Breast epithelium (tissue), 4 donors: ENCODE measurements at regions of chrX and their contacts with region 1.

Region 1: DNA sequence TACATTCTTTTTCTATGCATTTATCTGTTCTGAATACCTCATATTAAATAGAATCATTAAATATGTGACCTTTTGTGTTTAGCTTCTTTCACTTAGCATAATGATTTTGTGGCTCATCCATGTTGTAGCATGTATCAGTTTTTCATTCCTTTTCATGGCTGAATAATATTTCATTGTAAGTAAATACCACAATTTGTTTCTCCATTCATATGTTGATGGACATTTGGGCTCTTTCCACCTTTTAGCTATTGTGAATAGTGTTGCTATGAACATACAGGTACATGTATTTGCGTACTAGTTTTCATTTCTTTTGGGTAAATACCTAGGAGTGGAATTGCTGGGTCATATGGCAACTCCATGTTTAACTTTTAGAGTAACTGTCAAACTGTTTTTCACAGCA is 85.1 kb downstream of the GNL3L start:
- DNase-seq: no peak
- H3K4me3 ChIP-seq: no peak overlapping the region
- H3K27ac ChIP-seq: no peak overlapping the region
- H3K4me1 ChIP-seq: no peaks in the 10 kb centered on the region
- H3K27me3 ChIP-seq: peaks cover 0 to 4% of the 10 kb centered on the region in 2 donors
- CTCF ChIP-seq: no peak
- POLR2A ChIP-seq: no peak

Region 2: DNA sequence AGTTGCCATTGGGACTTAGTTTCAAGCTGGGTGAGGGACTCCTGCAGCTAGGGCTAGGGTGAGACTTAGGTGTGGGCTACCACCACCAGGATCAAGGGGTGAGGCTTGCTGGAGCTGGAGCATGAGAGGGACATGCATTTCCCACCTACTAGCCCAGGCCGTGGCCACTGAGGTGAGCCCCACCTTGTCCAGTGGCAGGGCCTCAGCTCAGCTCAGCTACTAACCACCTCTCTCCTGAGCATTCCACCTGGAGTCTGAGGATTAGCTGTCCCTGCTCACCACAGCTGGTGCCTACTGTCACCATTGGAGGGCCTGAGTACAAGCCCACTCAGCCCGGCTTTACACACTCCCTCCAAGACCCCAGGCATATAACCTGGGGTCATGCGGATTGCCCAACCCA is 774.3 kb after region 1 on chrX:
- intact Hi-C with region 1: loop called (anchors 5 kb)
- DNase-seq: no peak
- H3K4me3 ChIP-seq: no peak overlapping the region
- H3K27ac ChIP-seq: no peak overlapping the region
- H3K4me1 ChIP-seq: no peaks in the 10 kb centered on the region
- H3K27me3 ChIP-seq: peaks cover 0 to 41% of the 10 kb centered on the region in 2 donors
- CTCF ChIP-seq: no peak
- POLR2A ChIP-seq: no peak